ENCODE measurements at regions of chr1 and their contacts with region 1.

Region 1: GRCh38 chr1:23344111-23344986 is at the start of gene HNRNPR:
- DNase-seq: peak; percentile 100
- H3K4me3 ChIP-seq: peak within 1 kb of the TSS; percentile 68 to 92 (median 84)
- H3K27ac ChIP-seq: peak within 1 kb of the TSS; percentile 91 to 99 (median 98)
- H3K4me1 ChIP-seq: peaks cover 0 to 48% (median 44%) of the 10 kb centered on the region in 4 donors
- H3K27me3 ChIP-seq: no peaks in the 10 kb centered on the region
- CTCF ChIP-seq: no peak
- EP300 ChIP-seq: no peak
- POLR2A ChIP-seq: peak; percentile 83
- total RNA-seq, gene HNRNPR: 59.3 to 72.1 (median 62.8) TPM

Region 2: DNA sequence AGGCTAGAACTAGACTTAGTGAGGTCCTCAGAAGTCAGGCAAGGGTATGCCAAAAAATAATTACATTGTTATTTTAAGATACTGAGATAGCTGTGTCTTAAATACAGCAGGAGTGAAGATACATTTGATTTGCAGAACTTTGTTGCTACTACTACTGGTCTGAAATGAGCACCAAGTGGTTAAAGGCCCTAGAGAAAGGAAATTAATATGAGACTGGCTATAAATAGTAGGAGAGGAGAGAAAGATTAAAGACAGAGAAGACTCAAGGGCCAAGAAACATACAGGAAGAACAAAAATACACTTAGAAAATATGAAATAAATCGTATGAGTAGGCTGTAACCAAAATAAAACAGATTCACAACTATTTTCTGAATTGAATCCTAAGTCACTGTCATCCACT is 21.6 kb before region 1 on chr1:
- intact Hi-C with region 1: no loop called
- DNase-seq: no peak
- H3K4me3 ChIP-seq: no peak overlapping the region
- H3K27ac ChIP-seq: no peak overlapping the region
- H3K4me1 ChIP-seq: peaks cover 0 to 6% (median 3%) of the 10 kb centered on the region in 4 donors
- H3K27me3 ChIP-seq: no peaks in the 10 kb centered on the region
- CTCF ChIP-seq: no peak
- EP300 ChIP-seq: no peak
- POLR2A ChIP-seq: no peak

Region 3: GRCh38 chr1:23367791-23368561 is 23.6 kb after region 1 on chr1:
- intact Hi-C with region 1: loop called (anchors 1 kb)
- DNase-seq: peak; percentile 99
- H3K4me3 ChIP-seq: peak overlapping the region; percentile 72 to 91 (median 82)
- H3K27ac ChIP-seq: peak overlapping the region; percentile 97 to 99 (median 98)
- H3K4me1 ChIP-seq: peaks cover 0 to 53% (median 43%) of the 10 kb centered on the region in 4 donors
- H3K27me3 ChIP-seq: no peaks in the 10 kb centered on the region
- CTCF ChIP-seq: no peak
- EP300 ChIP-seq: no peak
- POLR2A ChIP-seq: peak; percentile 44 to 68

Region 4: GRCh38 chr1:23403735-23404486 is 59.6 kb after region 1 on chr1:
- intact Hi-C with region 1: loop called (anchors 2 kb)
- DNase-seq: peak; percentile 95
- H3K4me3 ChIP-seq: peak overlapping the region in 2 of 4 donors; percentile 18 to 21
- H3K27ac ChIP-seq: peak overlapping the region; percentile 59 to 74 (median 70)
- H3K4me1 ChIP-seq: peaks cover 0 to 26% (median 20%) of the 10 kb centered on the region in 4 donors
- H3K27me3 ChIP-seq: no peaks in the 10 kb centered on the region
- CTCF ChIP-seq: peak; percentile 80 to 96 (median 95)
- EP300 ChIP-seq: no peak
- POLR2A ChIP-seq: no peak

Region 5: DNA sequence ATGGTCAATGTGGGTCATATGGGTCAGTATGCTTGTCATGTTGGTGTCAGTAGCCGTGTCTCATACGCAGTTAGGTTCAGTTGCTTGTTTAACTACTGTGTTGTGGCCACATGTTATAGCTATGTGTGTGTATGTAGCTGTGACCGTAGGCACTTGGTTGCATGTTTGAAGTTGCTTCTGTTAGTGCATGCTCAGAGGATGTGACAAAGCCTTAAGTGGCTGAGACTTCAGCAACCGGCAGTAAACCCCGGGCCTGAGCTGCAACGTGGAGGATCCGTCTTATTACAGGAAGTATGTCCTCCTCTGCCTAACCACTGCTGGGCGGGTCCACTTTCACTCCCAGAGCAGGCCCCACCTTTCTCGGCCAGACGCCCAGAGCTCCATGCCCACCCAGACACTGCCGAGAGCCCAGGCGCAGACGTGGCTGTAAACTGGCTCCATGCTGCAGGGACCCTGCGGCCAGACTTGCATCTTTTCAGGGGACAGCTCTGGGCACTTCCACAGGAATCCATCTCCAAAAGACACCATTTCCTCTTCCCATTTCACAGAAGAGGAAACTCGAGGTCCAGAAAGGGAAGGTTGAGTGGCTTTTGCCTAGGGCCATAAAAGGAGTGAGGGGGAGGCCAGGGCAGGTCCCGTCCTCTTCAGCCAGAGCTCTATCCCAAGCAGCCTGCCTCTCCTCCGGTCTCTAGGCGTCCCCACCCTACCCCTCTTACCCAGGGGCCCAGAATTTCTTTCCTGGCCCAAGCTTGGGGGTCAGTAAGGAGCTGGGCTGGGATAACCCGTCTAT is 78.1 kb after region 1 on chr1:
- intact Hi-C with region 1: loop called (anchors 2 kb)
- DNase-seq: peak; percentile 90
- H3K4me3 ChIP-seq: peak overlapping the region in 3 of 4 donors; percentile 18 to 75 (median 25)
- H3K27ac ChIP-seq: peak overlapping the region; percentile 81 to 89 (median 87)
- H3K4me1 ChIP-seq: peaks cover 0 to 50% (median 38%) of the 10 kb centered on the region in 4 donors
- H3K27me3 ChIP-seq: no peaks in the 10 kb centered on the region
- CTCF ChIP-seq: no peak
- EP300 ChIP-seq: no peak
- POLR2A ChIP-seq: peak in 1 of 2 donors; percentile 18

Region 6: DNA sequence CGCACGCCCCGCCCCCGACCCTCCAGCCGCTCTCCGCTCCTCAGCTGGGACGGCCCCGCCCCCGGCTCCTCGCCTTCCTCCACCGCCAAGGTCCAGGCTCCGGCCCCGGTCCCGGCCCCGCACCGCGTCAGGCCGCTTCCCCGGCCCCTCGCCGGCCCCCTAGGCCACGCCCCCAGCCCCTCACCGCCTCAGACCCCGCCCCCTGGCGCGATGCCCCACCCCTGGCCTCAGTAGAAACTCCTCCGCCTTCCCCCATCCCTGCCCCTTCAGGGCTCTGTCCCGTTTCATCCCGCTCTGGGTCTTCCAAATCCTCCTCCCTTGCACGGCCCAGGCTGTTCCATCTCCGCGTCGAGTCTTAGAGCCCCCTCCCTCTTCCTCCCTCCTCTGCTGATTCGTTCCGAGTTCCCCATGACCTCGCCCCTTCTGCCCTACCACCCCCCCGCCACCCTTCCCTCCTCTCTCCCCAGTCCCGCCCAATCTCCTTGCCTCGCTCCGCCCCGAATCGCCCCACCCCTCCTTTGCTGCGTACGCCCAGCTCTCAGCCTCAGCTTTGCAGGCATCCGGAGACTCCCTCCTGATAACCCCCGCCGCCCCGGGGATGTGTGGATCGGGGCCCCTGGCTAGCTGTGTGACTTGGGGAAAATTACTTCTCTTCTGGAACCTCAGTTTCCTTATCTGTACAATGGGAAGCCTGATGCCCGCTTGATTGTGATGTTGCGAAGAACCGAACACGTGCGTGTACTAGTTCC is 140.1 kb after region 1 on chr1:
- intact Hi-C with region 1: loop called (anchors 5 kb)
- DNase-seq: peak; percentile 97
- H3K4me3 ChIP-seq: peak overlapping the region; percentile 67 to 98 (median 94)
- H3K27ac ChIP-seq: peak overlapping the region; percentile 88 to 98 (median 94)
- H3K4me1 ChIP-seq: peaks cover 0 to 29% (median 17%) of the 10 kb centered on the region in 4 donors
- H3K27me3 ChIP-seq: no peaks in the 10 kb centered on the region
- CTCF ChIP-seq: no peak
- EP300 ChIP-seq: no peak
- POLR2A ChIP-seq: no peak